ENCODE measurements at regions of chr20 and their contacts with region 1.

Region 1: GRCh38 chr20:39214828-39215227 is 252.7 kb downstream of the DHX35 start:
- DNase-seq: no peak
- H3K4me3 ChIP-seq: no peak overlapping the region
- H3K27ac ChIP-seq: no peak overlapping the region
- H3K4me1 ChIP-seq: no peaks in the 10 kb centered on the region
- H3K27me3 ChIP-seq: peaks cover 0 to 6% of the 10 kb centered on the region in 2 donors
- CTCF ChIP-seq: no peak
- POLR2A ChIP-seq: no peak

Region 2: GRCh38 chr20:39309458-39309857 is 94.6 kb after region 1 on chr20:
- intact Hi-C with region 1: loop called (anchors 5 kb)
- DNase-seq: no peak
- H3K4me3 ChIP-seq: no peak overlapping the region
- H3K27ac ChIP-seq: no peak overlapping the region
- H3K4me1 ChIP-seq: no peaks in the 10 kb centered on the region
- H3K27me3 ChIP-seq: no peaks in the 10 kb centered on the region
- CTCF ChIP-seq: no peak
- POLR2A ChIP-seq: no peak

Region 3: GRCh38 chr20:40265825-40266533 is 1051.2 kb after region 1 on chr20:
- intact Hi-C with region 1: no loop called
- DNase-seq: no peak
- H3K4me3 ChIP-seq: no peak overlapping the region
- H3K27ac ChIP-seq: no peak overlapping the region
- H3K4me1 ChIP-seq: no peaks in the 10 kb centered on the region
- H3K27me3 ChIP-seq: no peaks in the 10 kb centered on the region
- CTCF ChIP-seq: peak in 2 of 3 donors; percentile 40 to 52
- POLR2A ChIP-seq: no peak

Measured in breast epithelium (tissue), 4 donors.